Activated naive CD4-positive, alpha-beta T cell treated with anti-CD3 and anti-CD28 coated beads for 36 hours (primary cell): ENCODE measurements at regions of chr14 and their contacts with region 1.

Region 1: GRCh38 chr14:76456200-76456599 is 80.3 kb downstream of the ESRRB start:
- DNase-seq: peak; percentile 63
- H3K4me3 Mint-ChIP-seq: no peak overlapping the region
- H3K27ac Mint-ChIP-seq: no peak overlapping the region
- H3K4me1 Mint-ChIP-seq: no peaks in the 10 kb centered on the region
- H3K27me3 Mint-ChIP-seq: peaks cover 8% of the 10 kb centered on the region

Region 2: DNA sequence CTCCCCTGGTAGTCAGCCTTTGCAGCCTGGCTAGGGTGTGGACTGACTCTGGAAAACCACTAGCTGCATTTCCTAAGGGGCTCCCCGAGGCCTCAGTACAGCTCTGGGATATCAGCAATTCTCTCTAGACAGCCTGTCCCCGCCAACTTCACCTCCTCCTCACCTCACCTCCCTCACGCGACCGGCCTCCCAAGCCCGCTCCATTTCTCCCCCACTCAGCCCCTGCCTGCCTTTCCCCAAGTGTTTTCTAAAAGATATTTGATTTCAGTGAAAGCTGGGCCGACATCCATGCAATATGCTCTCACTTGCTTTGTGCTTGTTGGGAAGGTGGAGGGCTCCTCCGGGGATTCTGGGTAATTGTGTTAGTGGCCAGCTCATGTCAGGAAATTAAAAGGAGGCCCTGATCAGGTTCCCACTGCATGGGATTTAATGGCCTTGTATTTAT is 11.5 kb after region 1 on chr14:
- CTCF ChIA-PET with region 1: interaction called, 15 read pairs
- intact Hi-C with region 1: no loop called
- DNase-seq: no peak
- H3K4me3 Mint-ChIP-seq: no peak overlapping the region
- H3K27ac Mint-ChIP-seq: no peak overlapping the region
- H3K4me1 Mint-ChIP-seq: no peaks in the 10 kb centered on the region
- H3K27me3 Mint-ChIP-seq: peaks cover 12% of the 10 kb centered on the region

Region 3: GRCh38 chr14:76473481-76474263 is 17.5 kb after region 1 on chr14:
- CTCF ChIA-PET with region 1: interaction called, 15 read pairs
- intact Hi-C with region 1: no loop called
- DNase-seq: no peak
- H3K4me3 Mint-ChIP-seq: no peak overlapping the region
- H3K27ac Mint-ChIP-seq: no peak overlapping the region
- H3K4me1 Mint-ChIP-seq: no peaks in the 10 kb centered on the region
- H3K27me3 Mint-ChIP-seq: peaks cover 23% of the 10 kb centered on the region

Region 4: DNA sequence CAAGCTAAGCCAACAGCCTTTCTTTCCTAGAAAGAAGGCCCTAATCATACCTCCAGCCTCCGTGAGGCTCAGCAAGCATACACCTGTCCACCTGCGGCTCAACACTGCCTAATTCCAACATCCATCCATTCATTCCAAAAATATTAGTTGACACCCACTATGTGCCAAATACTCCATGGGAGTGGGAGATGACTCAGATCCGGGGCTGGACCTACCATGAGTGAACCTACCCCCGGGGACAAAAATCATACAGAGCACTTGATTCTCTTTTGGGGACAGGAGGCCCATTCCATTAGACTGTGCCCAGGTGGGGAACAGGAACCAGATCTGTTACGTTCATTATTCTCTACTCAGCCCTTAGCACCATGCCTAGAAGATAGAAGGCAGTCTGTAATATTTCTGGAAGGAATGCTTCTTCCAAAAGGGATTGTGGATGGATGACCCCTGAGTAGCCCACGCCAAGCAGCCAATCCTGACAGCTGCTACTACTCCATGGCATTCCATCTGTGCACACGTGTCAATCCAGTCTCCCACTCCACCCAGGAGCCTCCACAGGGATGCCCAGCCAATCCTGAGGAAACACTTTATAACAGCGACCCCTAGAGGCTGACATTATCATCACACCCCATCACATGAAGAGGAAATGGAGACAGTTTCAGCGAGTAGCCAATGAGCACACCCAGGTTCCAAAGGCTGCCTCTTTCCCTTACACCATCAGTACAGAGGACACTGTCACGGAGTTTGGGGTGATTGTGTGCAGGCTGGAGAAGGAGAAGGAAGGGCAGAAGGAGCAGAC is 90.4 kb after region 1 on chr14:
- CTCF ChIA-PET with region 1: no interaction called
- intact Hi-C with region 1: loop called (anchors 5 kb)
- DNase-seq: peak; percentile 29
- H3K4me3 Mint-ChIP-seq: no peak overlapping the region
- H3K27ac Mint-ChIP-seq: no peak overlapping the region
- H3K4me1 Mint-ChIP-seq: no peaks in the 10 kb centered on the region
- H3K27me3 Mint-ChIP-seq: peaks cover 3% of the 10 kb centered on the region

Region 5: DNA sequence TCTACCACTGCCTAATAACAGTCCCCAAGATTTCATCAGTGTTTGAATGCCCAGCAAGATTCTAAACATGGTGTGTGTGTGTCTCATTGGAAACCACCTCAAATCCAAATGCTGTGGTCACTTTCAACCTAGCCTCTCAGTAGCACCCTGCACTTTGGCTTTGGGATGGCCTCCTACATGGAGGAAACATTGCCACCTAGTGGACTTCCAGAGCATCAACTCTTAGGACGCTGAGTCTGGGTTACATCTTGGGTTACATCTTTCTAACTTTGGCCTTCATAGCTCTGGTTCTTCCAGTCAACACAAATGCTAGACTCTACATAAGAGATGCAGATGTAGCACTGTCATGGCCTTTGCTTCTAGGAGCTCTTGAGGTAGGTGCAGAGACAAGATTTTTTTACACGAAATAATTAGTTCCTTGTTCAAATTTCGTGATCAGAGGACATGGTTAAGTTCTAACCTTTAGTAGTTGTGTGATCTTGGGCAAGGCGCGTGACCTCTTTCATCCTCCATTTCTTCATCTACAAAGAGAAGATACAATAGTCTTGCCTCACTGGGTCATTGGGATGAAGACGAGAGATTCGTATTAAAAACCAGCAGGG is 191.6 kb after region 1 on chr14:
- CTCF ChIA-PET with region 1: interaction called, 6 read pairs
- intact Hi-C with region 1: loop called (anchors 1 kb)
- DNase-seq: peak; percentile 34
- H3K4me3 Mint-ChIP-seq: no peak overlapping the region
- H3K27ac Mint-ChIP-seq: no peak overlapping the region
- H3K4me1 Mint-ChIP-seq: no peaks in the 10 kb centered on the region
- H3K27me3 Mint-ChIP-seq: peaks cover 4% of the 10 kb centered on the region